Astrocyte of the cerebellum (primary cell): ENCODE measurements at regions of chr1 and their contacts with region 1.

Region 1: DNA sequence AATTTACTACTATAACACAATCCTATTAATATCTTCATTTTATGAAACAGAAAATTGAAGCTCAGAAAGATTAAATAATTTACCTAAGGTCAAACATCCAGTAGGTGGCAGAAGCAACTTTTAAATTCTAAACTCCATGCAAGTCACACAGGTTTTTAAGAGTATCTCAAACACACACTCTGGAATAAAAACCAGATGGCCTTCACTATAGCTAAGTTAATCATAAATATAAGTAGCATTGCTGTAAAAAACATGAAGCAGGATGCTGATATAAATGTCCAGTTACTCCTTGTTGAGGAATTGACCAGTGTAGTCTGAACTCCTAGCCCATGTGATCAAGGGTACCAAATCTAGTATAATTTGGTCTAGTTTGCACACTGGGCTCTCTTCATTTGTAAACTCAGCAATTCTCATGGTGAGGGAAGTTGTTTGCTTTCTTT is 9.4 kb upstream of the FMO3 start:
- DNase-seq: peak; percentile 63
- H3K4me3 ChIP-seq: no peak overlapping the region
- CTCF ChIP-seq: no peak

Region 2: GRCh38 chr1:171141688-171142415 is 60.5 kb after region 1 on chr1:
- in situ Hi-C with region 1: loop called (anchors 5 kb)
- DNase-seq: peak; percentile 99
- H3K4me3 ChIP-seq: no peak overlapping the region
- CTCF ChIP-seq: peak; percentile 73

Region 3: GRCh38 chr1:171206978-171207355 is 125.6 kb after region 1 on chr1:
- in situ Hi-C with region 1: no loop called
- DNase-seq: no peak
- H3K4me3 ChIP-seq: no peak overlapping the region
- CTCF ChIP-seq: no peak

Region 4: DNA sequence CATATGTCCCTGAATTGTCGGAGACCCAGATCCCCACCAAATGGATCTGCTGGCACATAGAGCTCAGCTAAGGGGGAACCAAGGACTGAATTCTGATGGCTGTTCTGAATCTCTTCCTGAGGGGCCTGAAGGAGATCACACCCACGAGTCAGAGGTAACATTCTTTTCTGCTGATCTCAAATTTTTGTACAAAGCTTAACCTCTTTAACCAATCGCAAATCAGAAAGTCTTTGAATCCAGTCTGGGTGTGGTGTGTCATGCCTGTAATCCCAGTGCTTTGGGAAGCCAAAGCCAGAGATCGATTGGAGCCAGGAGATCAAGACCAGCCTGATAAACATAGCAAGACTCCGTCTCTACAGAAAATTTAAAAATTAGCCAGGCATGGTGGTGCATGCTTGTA is 341.2 kb after region 1 on chr1:
- in situ Hi-C with region 1: no loop called
- DNase-seq: no peak
- H3K4me3 ChIP-seq: no peak overlapping the region
- CTCF ChIP-seq: no peak